CD4-positive, alpha-beta memory T cell (primary cell): ENCODE measurements at regions of chr3 and their contacts with region 1.

Region 1: GRCh38 chr3:171772427-171773056 is 37.7 kb downstream of the PLD1 start:
- DNase-seq: peak; percentile 32 to 39 (median 36)
- H3K4me3 ChIP-seq: no peak overlapping the region
- H3K4me3 Mint-ChIP-seq: no peak overlapping the region
- H3K27ac ChIP-seq: no peak overlapping the region
- H3K27ac Mint-ChIP-seq: no peak overlapping the region
- H3K4me1 ChIP-seq: no peaks in the 10 kb centered on the region
- H3K4me1 Mint-ChIP-seq: peaks cover 0 to 6% (median 1%) of the 10 kb centered on the region in 4 donors
- H3K27me3 ChIP-seq: no peaks in the 10 kb centered on the region
- H3K27me3 Mint-ChIP-seq: peaks cover under 1 to 5% of the 10 kb centered on the region in 2 donors

Region 2: DNA sequence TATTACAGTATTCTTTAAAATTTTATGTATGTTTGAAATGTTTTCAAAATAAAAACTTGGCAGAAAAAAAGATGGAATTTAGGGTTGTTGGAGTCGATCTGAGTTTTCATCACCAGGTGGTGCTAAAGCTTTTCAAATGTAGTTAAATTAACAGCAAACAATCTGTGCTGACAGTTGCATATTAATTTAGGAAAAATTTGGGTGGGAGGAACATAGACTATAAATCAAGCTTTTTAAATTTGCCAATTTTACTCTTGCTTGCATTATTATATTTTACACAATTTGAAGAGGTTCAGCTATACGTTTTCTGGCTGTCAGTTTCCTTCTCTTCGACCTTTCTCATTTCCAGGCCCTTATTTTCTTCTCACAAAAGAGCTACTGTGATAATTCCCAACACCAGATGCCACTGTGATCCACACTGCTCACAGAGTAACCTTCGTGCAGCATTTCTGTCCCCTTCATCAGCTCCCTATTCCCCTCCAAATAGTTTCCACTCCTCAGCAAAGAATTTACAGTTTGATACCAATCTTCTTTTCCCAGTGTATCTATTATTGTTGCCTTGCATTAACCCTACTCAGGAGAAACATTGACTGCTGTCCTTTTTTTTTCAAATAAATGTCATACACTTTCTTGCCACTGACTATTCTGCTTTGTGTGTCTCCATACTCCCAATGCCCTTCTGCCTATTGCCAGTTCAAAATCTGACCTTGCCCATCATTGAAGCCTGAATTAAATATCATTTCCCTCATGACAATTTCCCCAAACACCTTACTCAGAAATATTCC is 810.7 kb before region 1 on chr3:
- CTCF ChIA-PET with region 1: interaction called, 39 read pairs
- POLR2A ChIA-PET with region 1: no interaction called
- intact Hi-C with region 1: no loop called
- DNase-seq: peak in 3 of 5 donors; percentile 10 to 16 (median 15)
- H3K4me3 ChIP-seq: no peak overlapping the region
- H3K4me3 Mint-ChIP-seq: no peak overlapping the region
- H3K27ac ChIP-seq: no peak overlapping the region
- H3K27ac Mint-ChIP-seq: no peak overlapping the region
- H3K4me1 ChIP-seq: no peaks in the 10 kb centered on the region
- H3K4me1 Mint-ChIP-seq: no peaks in the 10 kb centered on the region
- H3K27me3 ChIP-seq: no peaks in the 10 kb centered on the region
- H3K27me3 Mint-ChIP-seq: peaks cover 0 to 2% of the 10 kb centered on the region in 2 donors

Region 3: DNA sequence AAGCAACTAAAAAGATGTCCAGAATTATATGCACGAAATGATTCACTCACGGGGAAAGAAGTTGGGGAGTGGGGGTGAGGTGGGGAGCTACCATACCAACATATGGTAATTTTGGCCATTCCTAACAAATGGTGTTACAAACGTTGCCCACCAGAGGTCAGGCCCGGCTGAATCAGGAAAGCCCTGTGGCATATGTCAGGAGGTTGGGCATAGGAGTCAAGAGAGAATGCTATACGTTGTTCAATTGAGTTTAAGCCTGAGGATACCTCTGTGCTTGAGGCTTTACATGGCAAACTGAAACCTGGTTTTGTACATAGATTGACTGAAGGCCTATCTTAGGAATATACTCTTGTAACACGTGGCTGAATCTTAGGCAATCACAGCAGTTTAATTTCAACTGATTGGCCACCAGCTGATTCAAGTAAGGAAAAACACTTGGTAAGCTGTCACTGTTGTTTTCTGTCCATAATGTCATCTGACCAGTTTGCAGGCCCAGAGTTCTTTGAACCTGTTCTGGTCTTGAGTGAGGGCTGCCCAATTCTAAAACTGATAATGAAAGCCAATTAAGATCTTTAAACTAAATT is 722.6 kb before region 1 on chr3:
- CTCF ChIA-PET with region 1: interaction called, 48 read pairs
- POLR2A ChIA-PET with region 1: no interaction called
- intact Hi-C with region 1: no loop called
- DNase-seq: peak in 4 of 5 donors; percentile 17 to 37 (median 23)
- H3K4me3 ChIP-seq: no peak overlapping the region
- H3K4me3 Mint-ChIP-seq: no peak overlapping the region
- H3K27ac ChIP-seq: no peak overlapping the region
- H3K27ac Mint-ChIP-seq: no peak overlapping the region
- H3K4me1 ChIP-seq: no peaks in the 10 kb centered on the region
- H3K4me1 Mint-ChIP-seq: peaks cover 0 to 4% (median 1%) of the 10 kb centered on the region in 4 donors
- H3K27me3 ChIP-seq: no peaks in the 10 kb centered on the region
- H3K27me3 Mint-ChIP-seq: peaks cover 6 to 7% of the 10 kb centered on the region in 2 donors

Region 4: DNA sequence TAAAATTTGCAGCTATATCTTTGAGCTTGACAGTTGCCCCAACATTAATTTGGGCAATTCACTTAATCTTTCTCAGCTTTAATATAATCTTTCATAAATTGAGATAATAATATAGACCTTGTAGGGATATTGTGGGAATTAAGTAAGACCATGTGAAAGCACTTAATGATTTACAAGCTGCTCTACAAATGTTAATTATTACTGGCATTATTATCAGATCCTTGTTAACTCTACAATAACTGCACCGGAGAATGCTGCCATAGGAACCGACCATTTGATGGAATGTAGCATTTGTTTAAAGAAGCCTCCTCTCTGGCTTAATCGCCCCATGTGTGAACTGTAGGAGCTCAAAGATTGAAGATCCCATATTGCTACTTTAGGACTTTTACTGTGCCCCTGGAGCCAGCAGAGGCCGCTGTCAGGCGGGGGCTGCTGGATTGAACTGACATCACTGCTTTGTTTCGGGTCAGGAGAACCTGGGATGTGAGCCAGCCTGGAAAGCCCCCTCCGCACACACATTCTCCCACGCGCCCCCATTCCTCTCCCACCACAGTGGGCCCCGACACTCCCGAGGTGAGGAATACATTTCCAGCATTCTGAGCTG is 158.1 kb before region 1 on chr3:
- CTCF ChIA-PET with region 1: interaction called, 15 read pairs
- POLR2A ChIA-PET with region 1: no interaction called
- intact Hi-C with region 1: no loop called
- DNase-seq: peak in 1 of 5 donors; percentile 1
- H3K4me3 ChIP-seq: no peak overlapping the region
- H3K4me3 Mint-ChIP-seq: no peak overlapping the region
- H3K27ac ChIP-seq: no peak overlapping the region
- H3K27ac Mint-ChIP-seq: no peak overlapping the region
- H3K4me1 ChIP-seq: no peaks in the 10 kb centered on the region
- H3K4me1 Mint-ChIP-seq: no peaks in the 10 kb centered on the region
- H3K27me3 ChIP-seq: no peaks in the 10 kb centered on the region
- H3K27me3 Mint-ChIP-seq: peaks cover 0 to 2% of the 10 kb centered on the region in 2 donors

Region 5: GRCh38 chr3:171646357-171647133 is 126.0 kb before region 1 on chr3:
- CTCF ChIA-PET with region 1: interaction called, 16 read pairs
- POLR2A ChIA-PET with region 1: no interaction called
- intact Hi-C with region 1: no loop called
- DNase-seq: peak in 4 of 5 donors; percentile 5 to 12 (median 6)
- H3K4me3 ChIP-seq: no peak overlapping the region
- H3K4me3 Mint-ChIP-seq: no peak overlapping the region
- H3K27ac ChIP-seq: no peak overlapping the region
- H3K27ac Mint-ChIP-seq: no peak overlapping the region
- H3K4me1 ChIP-seq: no peaks in the 10 kb centered on the region
- H3K4me1 Mint-ChIP-seq: no peaks in the 10 kb centered on the region
- H3K27me3 ChIP-seq: no peaks in the 10 kb centered on the region
- H3K27me3 Mint-ChIP-seq: no peaks in the 10 kb centered on the region

Region 6: GRCh38 chr3:171678971-171679492 is 93.5 kb before region 1 on chr3:
- CTCF ChIA-PET with region 1: no interaction called
- POLR2A ChIA-PET with region 1: no interaction called
- intact Hi-C with region 1: no loop called
- DNase-seq: no peak
- H3K4me3 ChIP-seq: no peak overlapping the region
- H3K4me3 Mint-ChIP-seq: no peak overlapping the region
- H3K27ac ChIP-seq: no peak overlapping the region
- H3K27ac Mint-ChIP-seq: no peak overlapping the region
- H3K4me1 ChIP-seq: no peaks in the 10 kb centered on the region
- H3K4me1 Mint-ChIP-seq: no peaks in the 10 kb centered on the region
- H3K27me3 ChIP-seq: no peaks in the 10 kb centered on the region
- H3K27me3 Mint-ChIP-seq: peaks cover 4 to 8% of the 10 kb centered on the region in 2 donors

Region 7: DNA sequence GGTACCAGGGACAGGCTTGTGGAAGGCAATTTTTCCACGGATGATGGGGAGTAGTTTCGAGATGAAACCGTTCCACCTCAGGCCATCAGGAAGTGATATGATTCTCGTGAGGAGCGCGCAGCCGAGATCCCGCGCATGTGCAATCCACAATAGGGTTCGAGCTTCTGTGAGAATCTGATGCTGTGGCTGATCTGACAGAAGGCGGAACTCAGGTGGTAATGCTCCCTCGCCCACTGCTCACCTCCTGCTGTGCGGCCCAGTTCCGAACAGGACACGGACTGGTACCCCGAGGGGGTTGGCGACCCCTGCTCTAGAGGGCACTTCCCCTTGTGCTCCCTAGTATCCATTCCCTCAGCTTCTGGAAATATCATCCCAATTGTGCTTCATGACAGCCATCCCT is 62.2 kb before region 1 on chr3:
- CTCF ChIA-PET with region 1: no interaction called
- POLR2A ChIA-PET with region 1: no interaction called
- intact Hi-C with region 1: no loop called
- DNase-seq: no peak
- H3K4me3 ChIP-seq: no peak overlapping the region
- H3K4me3 Mint-ChIP-seq: no peak overlapping the region
- H3K27ac ChIP-seq: no peak overlapping the region
- H3K27ac Mint-ChIP-seq: no peak overlapping the region
- H3K4me1 ChIP-seq: no peaks in the 10 kb centered on the region
- H3K4me1 Mint-ChIP-seq: no peaks in the 10 kb centered on the region
- H3K27me3 ChIP-seq: no peaks in the 10 kb centered on the region
- H3K27me3 Mint-ChIP-seq: no peaks in the 10 kb centered on the region

Region 8: GRCh38 chr3:171757361-171758034 is 15.0 kb before region 1 on chr3:
- CTCF ChIA-PET with region 1: interaction called, 14 read pairs
- POLR2A ChIA-PET with region 1: no interaction called
- intact Hi-C with region 1: no loop called
- DNase-seq: no peak
- H3K4me3 ChIP-seq: no peak overlapping the region
- H3K4me3 Mint-ChIP-seq: no peak overlapping the region
- H3K27ac ChIP-seq: no peak overlapping the region
- H3K27ac Mint-ChIP-seq: no peak overlapping the region
- H3K4me1 ChIP-seq: no peaks in the 10 kb centered on the region
- H3K4me1 Mint-ChIP-seq: no peaks in the 10 kb centered on the region
- H3K27me3 ChIP-seq: peaks cover 5% of the 10 kb centered on the region
- H3K27me3 Mint-ChIP-seq: peaks cover 8 to 11% of the 10 kb centered on the region in 2 donors

Region 9: DNA sequence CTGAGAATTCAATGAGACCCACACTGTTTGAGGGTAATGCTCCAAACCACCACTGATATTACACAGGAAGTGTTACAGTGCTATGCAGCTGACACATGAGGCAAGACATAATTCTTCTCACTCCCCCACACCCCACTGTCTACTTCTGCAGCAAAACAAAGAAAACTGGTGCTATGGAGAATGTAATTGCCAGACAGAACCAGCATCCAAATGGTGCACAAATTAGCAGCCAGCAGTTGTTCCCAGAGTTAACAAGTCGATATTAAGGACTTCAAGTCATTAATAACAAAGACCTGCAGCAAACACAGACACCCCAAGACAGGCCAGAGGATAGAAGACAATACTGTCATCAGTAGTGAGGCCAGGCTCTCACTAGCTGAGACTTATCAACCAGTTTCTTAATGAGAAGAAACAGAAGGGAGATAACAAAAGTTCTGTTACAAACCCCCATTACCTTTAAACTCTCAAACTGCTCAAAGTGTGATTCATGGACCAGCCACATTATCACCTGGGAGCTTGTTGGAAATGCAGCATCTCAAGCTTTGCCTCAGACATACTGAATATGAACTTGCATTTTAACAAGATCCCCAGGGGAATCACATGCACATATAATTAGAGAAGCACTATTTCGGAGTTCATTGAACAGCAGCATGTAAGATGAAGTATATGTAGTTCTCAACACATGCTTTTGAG is 208.2 kb after region 1 on chr3:
- CTCF ChIA-PET with region 1: no interaction called
- POLR2A ChIA-PET with region 1: no interaction called
- intact Hi-C with region 1: no loop called
- DNase-seq: no peak
- H3K4me3 ChIP-seq: no peak overlapping the region
- H3K4me3 Mint-ChIP-seq: no peak overlapping the region
- H3K27ac ChIP-seq: no peak overlapping the region
- H3K27ac Mint-ChIP-seq: no peak overlapping the region
- H3K4me1 ChIP-seq: no peaks in the 10 kb centered on the region
- H3K4me1 Mint-ChIP-seq: peaks cover 3 to 8% (median 6%) of the 10 kb centered on the region in 4 donors
- H3K27me3 ChIP-seq: no peaks in the 10 kb centered on the region
- H3K27me3 Mint-ChIP-seq: no peaks in the 10 kb centered on the region